ENCODE measurements at regions of chr15 and their contacts with region 1.

Region 1: GRCh38 chr15:100448492-100448891 is 80.3 kb downstream of the CERS3 start:
- DNase-seq: no peak
- H3K4me3 ChIP-seq: no peak overlapping the region
- H3K27ac ChIP-seq: no peak overlapping the region
- H3K4me1 ChIP-seq: no peaks in the 10 kb centered on the region
- H3K27me3 ChIP-seq: no peaks in the 10 kb centered on the region
- CTCF ChIP-seq: no peak
- EP300 ChIP-seq: no peak
- POLR2A ChIP-seq: no peak

Region 2: DNA sequence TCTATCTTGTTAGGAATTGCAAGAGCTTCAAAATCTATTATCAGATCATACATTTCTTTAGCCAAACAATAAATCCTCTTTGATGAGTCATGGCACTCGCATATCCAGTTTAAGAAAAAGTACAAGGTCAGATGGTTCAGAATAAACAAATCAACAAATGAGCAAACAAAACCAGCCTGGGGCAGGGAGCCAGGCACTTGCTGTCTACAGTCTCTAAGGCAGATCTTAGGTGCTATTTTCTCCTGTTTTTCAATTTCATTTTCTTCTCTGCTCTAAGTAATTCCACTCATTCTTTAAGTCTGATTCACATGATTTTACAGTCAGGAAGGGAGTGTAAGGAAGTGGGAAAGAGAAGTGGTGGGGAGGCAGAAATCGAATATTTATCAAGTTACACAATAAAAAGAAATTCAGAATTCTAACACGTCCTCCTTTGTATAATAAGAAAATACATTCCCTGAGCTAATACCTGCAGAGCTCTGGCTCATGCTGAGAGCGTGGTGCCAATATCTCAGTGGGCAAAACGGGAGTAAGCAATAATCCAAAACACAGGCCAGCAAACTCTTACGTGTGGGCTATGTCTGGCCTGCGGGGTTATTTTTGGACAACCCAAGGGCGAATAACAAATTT is 405.4 kb before region 1 on chr15:
- intact Hi-C with region 1: no loop called
- DNase-seq: no peak
- H3K4me3 ChIP-seq: no peak overlapping the region
- H3K27ac ChIP-seq: no peak overlapping the region
- H3K4me1 ChIP-seq: peaks cover 0 to 10% (median 1%) of the 10 kb centered on the region in 4 donors
- H3K27me3 ChIP-seq: no peaks in the 10 kb centered on the region
- CTCF ChIP-seq: no peak
- EP300 ChIP-seq: no peak
- POLR2A ChIP-seq: no peak

Region 3: DNA sequence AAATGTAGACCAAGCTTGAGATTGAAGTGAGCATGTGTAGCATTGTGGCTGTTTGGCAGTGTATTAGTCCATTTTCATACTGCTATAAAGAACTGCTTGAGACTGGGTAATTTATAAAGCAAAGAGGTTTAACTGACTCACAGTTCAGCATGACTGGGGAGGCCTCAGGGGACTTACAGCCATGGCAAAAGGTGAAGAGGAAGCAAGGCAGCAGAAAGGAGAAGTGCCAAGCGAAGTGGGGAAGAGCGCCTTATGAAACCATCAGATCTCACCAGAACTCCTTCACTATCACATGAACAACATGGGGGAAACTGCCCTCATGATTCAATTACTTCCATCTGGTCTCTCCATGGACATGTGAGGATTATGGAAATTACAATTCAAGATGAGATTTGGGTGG is 88.8 kb after region 1 on chr15:
- intact Hi-C with region 1: no loop called
- DNase-seq: no peak
- H3K4me3 ChIP-seq: no peak overlapping the region
- H3K27ac ChIP-seq: no peak overlapping the region
- H3K4me1 ChIP-seq: no peaks in the 10 kb centered on the region
- H3K27me3 ChIP-seq: peaks cover 0 to 2% (median 0%) of the 10 kb centered on the region in 3 donors
- CTCF ChIP-seq: no peak
- EP300 ChIP-seq: no peak
- POLR2A ChIP-seq: no peak

Region 4: DNA sequence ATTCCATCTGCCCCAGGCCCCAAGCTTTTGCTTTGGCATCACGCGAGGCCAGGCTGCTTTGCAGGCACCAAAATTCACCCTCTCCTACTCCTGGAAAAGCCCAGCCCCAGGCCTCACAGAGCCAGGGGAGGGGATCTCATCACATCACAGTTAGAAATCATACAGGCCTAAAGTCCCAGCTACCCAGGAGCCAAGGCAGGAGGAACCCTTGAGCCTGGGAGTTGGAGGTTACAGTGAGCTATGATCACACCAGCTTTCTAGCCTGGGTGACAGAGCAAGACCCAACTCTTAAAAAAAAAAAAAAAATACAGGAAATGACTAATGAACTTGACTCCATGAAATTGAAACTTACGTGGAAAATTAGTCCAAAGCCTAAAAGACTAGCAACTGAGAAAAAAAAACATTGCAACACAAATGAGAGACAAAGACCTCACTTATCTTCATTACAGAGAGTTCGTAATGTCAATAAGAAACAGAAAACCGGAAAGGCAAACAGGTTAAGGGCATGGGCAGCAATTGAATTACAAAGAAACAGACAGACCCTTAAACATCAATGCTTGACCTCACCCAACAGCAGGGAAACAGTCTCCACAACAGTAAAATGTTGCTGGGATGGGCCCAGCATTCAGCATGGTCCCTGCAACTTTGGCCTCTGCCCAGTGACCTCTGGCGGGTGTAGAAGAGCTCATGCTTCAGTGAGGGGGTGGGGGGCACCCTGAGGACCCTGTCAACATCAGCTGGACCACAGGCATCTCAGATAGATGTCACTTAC is 622.2 kb after region 1 on chr15:
- intact Hi-C with region 1: loop called (anchors 10 kb)
- DNase-seq: no peak
- H3K4me3 ChIP-seq: no peak overlapping the region
- H3K27ac ChIP-seq: peak overlapping the region; percentile 54 to 80 (median 73)
- H3K4me1 ChIP-seq: peaks cover 5 to 21% (median 15%) of the 10 kb centered on the region in 4 donors
- H3K27me3 ChIP-seq: no peaks in the 10 kb centered on the region
- CTCF ChIP-seq: no peak
- EP300 ChIP-seq: no peak
- POLR2A ChIP-seq: no peak

Measured in stomach (tissue), 19 donors.